Prostate gland (tissue), 2 donors: ENCODE measurements at regions of chr19 and their contacts with region 1.

Region 1: DNA sequence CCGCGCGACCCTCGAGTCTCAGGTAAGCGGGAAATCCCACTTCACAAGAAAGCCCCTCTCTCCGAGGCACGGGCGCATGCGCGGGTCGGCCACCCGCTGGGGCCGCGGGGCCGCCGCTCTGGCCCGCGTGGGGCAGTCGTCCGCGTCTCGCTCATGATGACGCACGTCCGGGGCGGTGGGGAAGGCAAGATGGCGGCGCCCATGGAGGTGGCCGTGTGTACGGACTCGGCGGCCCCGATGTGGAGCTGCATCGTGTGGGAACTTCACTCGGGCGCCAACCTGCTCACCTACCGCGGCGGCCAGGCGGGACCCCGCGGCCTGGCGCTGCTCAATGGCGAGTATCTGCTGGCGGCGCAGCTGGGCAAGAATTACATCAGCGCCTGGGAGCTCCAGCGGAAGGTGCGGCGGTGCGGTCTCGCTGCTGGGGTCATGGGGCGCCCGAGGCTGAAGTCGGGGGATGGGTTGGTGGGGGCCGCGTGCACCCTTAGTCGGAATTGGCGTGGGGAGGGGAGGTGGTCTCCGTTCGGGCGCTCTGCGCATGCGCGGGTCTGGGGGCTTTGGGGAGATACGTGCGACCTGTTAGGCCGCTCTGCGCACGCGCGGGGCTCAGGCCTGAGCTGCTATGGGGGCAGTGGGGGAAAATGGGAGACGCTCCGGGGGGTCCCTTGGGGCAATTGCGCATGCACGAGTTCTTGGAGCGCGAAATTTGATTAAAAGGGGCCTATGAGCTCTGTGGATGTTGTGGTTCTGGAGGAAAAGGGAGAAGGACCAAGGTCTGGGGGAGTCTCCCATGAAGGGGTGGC is at the start of gene WDR18:
- DNase-seq: peak; percentile 92
- H3K4me3 ChIP-seq: peak within 1 kb of the TSS; percentile 92 to 93
- H3K27ac ChIP-seq: peak within 1 kb of the TSS; percentile 79 to 88
- H3K4me1 ChIP-seq: no peaks in the 10 kb centered on the region
- H3K27me3 ChIP-seq: no peaks in the 10 kb centered on the region
- CTCF ChIP-seq: peak; percentile 12 to 71 (median 37)
- POLR2A ChIP-seq: peak; percentile 54
- total RNA-seq, gene WDR18: 35.0 to 94.8 TPM

Region 2: DNA sequence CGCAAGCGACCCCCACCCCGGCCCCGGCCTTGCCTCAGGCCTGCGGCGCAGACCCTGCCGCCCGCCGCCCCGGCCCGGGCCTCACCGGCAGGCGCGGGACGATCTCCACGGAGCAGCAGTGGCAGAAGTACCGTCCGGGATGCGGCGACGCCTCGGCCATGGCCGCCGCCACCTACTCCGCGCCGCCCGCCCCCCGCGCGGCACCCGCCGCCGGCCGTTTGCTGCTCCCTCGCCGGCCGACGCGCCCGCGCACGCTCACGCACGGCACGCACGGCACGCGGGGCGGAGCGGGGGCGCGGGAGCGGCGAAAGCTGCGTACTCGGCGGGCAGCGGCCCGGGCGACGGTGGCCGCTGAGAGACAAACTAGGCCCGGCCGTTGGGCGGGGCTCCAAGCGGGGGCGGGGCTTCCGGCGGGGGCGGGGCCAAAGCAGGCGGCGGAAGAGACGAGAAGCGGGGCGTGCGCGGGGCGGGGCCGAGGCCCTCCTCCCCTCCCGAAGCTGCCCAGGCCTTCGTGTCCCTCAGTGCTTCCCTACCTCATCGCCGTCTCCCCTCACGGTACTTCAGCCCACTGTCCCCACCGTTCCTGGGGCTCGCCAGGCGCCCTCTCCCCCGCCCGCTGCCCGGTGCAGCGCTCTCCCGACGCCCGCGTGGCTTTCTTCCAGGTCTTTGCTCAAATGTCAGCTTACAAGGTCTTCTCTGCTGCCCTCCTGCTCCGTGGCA is 321.2 kb before region 1 on chr19 and contains the start of gene RNF126:
- intact Hi-C with region 1: loop called (anchors 10 kb)
- DNase-seq: peak; percentile 88
- H3K4me3 ChIP-seq: peak within 1 kb of the TSS; percentile 96 to 97
- H3K27ac ChIP-seq: peak within 1 kb of the TSS; percentile 90 to 96
- H3K4me1 ChIP-seq: peaks cover 31% of the 10 kb centered on the region
- H3K27me3 ChIP-seq: no peaks in the 10 kb centered on the region
- CTCF ChIP-seq: no peak
- POLR2A ChIP-seq: peak; percentile 48
- total RNA-seq, gene RNF126: 70.7 to 109 TPM

Region 3: DNA sequence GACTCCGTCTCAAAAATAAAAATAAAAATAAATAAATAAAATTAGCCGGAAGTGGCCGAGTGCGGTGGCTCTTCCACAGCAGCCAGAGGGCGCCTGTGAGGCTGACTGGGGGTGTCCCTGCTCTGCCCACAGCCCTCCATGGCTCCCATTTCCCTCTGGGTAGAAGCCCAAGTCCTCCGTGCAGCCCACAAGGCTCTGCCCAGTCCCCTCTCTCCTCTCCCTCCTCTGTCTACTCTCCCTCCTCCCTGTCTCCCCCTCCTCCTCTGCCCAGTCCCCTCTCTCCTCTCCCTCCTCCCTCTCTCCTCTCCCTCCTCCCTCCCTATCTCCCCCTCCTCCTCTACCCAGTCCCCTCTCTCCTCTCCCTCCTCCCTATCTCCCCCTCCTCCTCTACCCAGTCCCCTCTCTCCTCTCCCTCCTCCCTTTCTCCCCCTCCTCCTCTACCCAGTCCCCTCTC is 213.0 kb before region 1 on chr19:
- intact Hi-C with region 1: loop called (anchors 10 kb)
- DNase-seq: no peak
- H3K4me3 ChIP-seq: no peak overlapping the region
- H3K27ac ChIP-seq: no peak overlapping the region
- H3K4me1 ChIP-seq: no peaks in the 10 kb centered on the region
- H3K27me3 ChIP-seq: no peaks in the 10 kb centered on the region
- CTCF ChIP-seq: peak in 1 of 4 experiments; percentile 28
- POLR2A ChIP-seq: no peak

Region 4: GRCh38 chr19:869245-870177 is 114.9 kb before region 1 on chr19:
- intact Hi-C with region 1: loop called (anchors 5 kb)
- DNase-seq: no peak
- H3K4me3 ChIP-seq: no peak overlapping the region
- H3K27ac ChIP-seq: peak overlapping the region; percentile 69 to 74
- H3K4me1 ChIP-seq: no peaks in the 10 kb centered on the region
- H3K27me3 ChIP-seq: no peaks in the 10 kb centered on the region
- CTCF ChIP-seq: no peak
- POLR2A ChIP-seq: peak; percentile 20

Region 5: GRCh38 chr19:913080-913748 is 71.2 kb before region 1 on chr19 and contains the start of gene R3HDM4:
- intact Hi-C with region 1: no loop called
- DNase-seq: peak; percentile 80
- H3K4me3 ChIP-seq: peak within 1 kb of the TSS; percentile 82 to 92
- H3K27ac ChIP-seq: peak within 1 kb of the TSS; percentile 92 to 93
- H3K4me1 ChIP-seq: peaks cover 11% of the 10 kb centered on the region
- H3K27me3 ChIP-seq: peaks cover 7% of the 10 kb centered on the region
- CTCF ChIP-seq: no peak
- POLR2A ChIP-seq: peak; percentile 63
- total RNA-seq, gene R3HDM4: 36.9 to 58.7 TPM

Region 6: GRCh38 chr19:925526-926322 is 58.6 kb before region 1 on chr19 and contains the start of gene ARID3A:
- intact Hi-C with region 1: loop called (anchors 1 kb)
- DNase-seq: peak; percentile 68
- H3K4me3 ChIP-seq: peak within 1 kb of the TSS; percentile 87 to 92
- H3K27ac ChIP-seq: peak within 1 kb of the TSS; percentile 85 to 87
- H3K4me1 ChIP-seq: peaks cover 3% of the 10 kb centered on the region
- H3K27me3 ChIP-seq: no peaks in the 10 kb centered on the region
- CTCF ChIP-seq: peak in 1 of 4 experiments; percentile 12
- POLR2A ChIP-seq: no peak
- total RNA-seq, gene ARID3A: 3.8 to 18.7 TPM